ENCODE measurements at regions of chr17 and their contacts with region 1.

Region 1: GRCh38 chr17:7583253-7584109 is at the start of gene MPDU1:
- DNase-seq: peak; percentile 90
- ATAC-seq: peak; percentile 76
- H3K4me3 Mint-ChIP-seq: peak within 1 kb of the TSS; percentile 100
- H3K27ac Mint-ChIP-seq: peak within 1 kb of the TSS; percentile 100
- H3K4me1 Mint-ChIP-seq: peaks cover 64% of the 10 kb centered on the region
- H3K27me3 Mint-ChIP-seq: no peaks in the 10 kb centered on the region
- CTCF ChIP-seq: no peak
- total RNA-seq, gene MPDU1: 50.7 and 58.9 TPM in 2 replicates

Region 2: GRCh38 chr17:7147772-7148171 is 435.7 kb before region 1 on chr17:
- CTCF ChIA-PET with region 1: no interaction called
- POLR2A ChIA-PET with region 1: no interaction called
- intact Hi-C with region 1: no loop called
- DNase-seq: no peak
- ATAC-seq: no peak
- H3K4me3 Mint-ChIP-seq: no peak overlapping the region
- H3K27ac Mint-ChIP-seq: no peak overlapping the region
- H3K4me1 Mint-ChIP-seq: no peaks in the 10 kb centered on the region
- H3K27me3 Mint-ChIP-seq: peaks cover 16% of the 10 kb centered on the region
- CTCF ChIP-seq: no peak

Region 3: DNA sequence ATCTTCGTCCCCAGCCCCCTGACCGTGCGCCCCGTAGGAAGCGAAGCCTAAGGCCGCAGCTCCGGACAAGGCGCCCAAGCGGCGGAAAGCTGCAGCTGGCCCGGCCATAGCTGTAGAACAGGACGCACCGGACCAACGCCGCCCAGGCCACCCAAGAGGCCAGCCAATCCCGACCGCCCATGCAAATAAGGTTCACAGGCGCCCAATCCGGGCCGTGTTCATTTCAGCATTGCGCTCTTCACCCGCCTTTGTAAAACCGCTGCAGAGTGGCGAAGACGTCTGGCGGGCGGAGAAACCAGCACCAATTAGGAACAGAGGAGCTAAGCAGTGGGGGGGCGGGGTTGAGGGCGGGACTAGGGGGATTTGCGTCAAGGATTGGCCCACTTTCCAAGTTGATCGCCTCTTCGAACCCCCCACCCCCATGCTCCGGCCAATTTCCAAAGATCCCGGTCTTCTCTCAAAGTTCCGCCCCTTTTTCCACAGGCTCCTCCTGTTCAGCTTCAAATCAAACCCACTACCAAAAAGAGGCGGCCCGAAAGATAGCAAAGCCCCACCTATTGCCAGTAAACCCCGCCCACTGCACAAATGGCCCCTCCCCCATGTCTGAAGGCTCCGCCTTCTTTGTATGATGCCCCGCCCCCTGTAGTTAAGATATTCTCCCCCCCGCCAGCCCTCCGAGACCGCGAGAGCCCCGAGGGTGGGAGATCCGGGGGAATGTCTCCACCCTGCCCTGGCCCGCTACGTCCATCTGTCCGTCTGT is 179.3 kb before region 1 on chr17 and contains the start of gene TMEM256:
- CTCF ChIA-PET with region 1: no interaction called
- POLR2A ChIA-PET with region 1: interaction called, 10 read pairs
- intact Hi-C with region 1: no loop called
- DNase-seq: peak; percentile 82
- ATAC-seq: peak; percentile 89
- H3K4me3 Mint-ChIP-seq: peak within 1 kb of the TSS; percentile 97
- H3K27ac Mint-ChIP-seq: peak within 1 kb of the TSS; percentile 94
- H3K4me1 Mint-ChIP-seq: peaks cover 16% of the 10 kb centered on the region
- H3K27me3 Mint-ChIP-seq: peaks cover 12% of the 10 kb centered on the region
- CTCF ChIP-seq: no peak
- total RNA-seq, gene TMEM256: 98.2 and 117 TPM in 2 replicates

Region 4: DNA sequence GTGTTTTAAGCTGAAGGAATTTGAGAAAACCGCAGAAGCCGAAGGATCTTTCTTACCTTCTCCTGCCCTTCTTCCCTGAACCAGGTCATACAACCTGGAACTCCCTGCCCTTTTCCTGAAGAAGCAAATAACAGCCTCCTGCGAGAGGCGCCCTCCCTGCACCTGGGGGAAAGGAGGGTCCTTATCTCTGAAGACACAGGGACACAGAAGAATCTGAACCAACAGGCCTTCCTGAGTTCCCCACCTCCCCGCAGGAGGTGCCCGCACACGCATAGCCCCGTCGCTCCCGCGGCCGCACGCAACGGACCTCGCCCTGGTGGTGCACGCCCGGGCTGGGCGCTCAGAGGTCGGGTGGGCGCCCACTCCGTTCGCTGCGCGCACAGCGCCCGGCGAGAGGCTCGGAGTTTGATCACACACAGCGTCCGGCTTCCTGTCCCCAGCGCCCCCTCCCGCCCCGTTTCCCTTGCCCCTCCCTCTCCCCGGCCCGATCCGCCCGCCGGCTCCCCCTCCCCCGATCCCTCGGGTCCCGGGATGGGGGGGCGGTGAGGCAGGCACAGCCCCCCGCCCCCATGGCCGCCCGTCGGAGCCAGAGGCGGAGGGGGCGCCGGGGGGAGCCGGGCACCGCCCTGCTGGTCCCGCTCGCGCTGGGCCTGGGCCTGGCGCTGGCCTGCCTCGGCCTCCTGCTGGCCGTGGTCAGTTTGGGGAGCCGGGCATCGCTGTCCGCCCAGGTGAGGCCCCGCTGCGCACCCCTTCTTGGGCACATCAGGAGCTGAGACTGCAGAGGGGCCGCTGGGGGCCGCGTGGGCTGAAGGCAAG is 34.7 kb before region 1 on chr17 and contains the start of gene TNFSF12:
- CTCF ChIA-PET with region 1: interaction called, 6 read pairs
- POLR2A ChIA-PET with region 1: interaction called, 20 read pairs
- intact Hi-C with region 1: no loop called
- DNase-seq: peak; percentile 55
- ATAC-seq: peak; percentile 58
- H3K4me3 Mint-ChIP-seq: peak within 1 kb of the TSS; percentile 82
- H3K27ac Mint-ChIP-seq: peak within 1 kb of the TSS; percentile 90
- H3K4me1 Mint-ChIP-seq: peaks cover 52% of the 10 kb centered on the region
- H3K27me3 Mint-ChIP-seq: no peaks in the 10 kb centered on the region
- CTCF ChIP-seq: no peak
- total RNA-seq, gene TNFSF12: 25.2 and 30.7 TPM in 2 replicates

Region 5: GRCh38 chr17:7627250-7628121 is 44.0 kb after region 1 on chr17 and contains the start of gene SAT2:
- CTCF ChIA-PET with region 1: interaction called, 3 read pairs
- POLR2A ChIA-PET with region 1: interaction called, 14 read pairs
- intact Hi-C with region 1: no loop called
- DNase-seq: peak; percentile 68
- ATAC-seq: peak; percentile 99
- H3K4me3 Mint-ChIP-seq: peak within 1 kb of the TSS; percentile 93
- H3K27ac Mint-ChIP-seq: peak within 1 kb of the TSS; percentile 80
- H3K4me1 Mint-ChIP-seq: peaks cover 11% of the 10 kb centered on the region
- H3K27me3 Mint-ChIP-seq: no peaks in the 10 kb centered on the region
- CTCF ChIP-seq: no peak
- total RNA-seq, gene SAT2: 44.5 and 45.0 TPM in 2 replicates

Region 6: GRCh38 chr17:7755095-7755890 is 171.8 kb after region 1 on chr17:
- CTCF ChIA-PET with region 1: no interaction called
- POLR2A ChIA-PET with region 1: no interaction called
- intact Hi-C with region 1: no loop called
- DNase-seq: no peak
- ATAC-seq: no peak
- H3K4me3 Mint-ChIP-seq: no peak overlapping the region
- H3K27ac Mint-ChIP-seq: no peak overlapping the region
- H3K4me1 Mint-ChIP-seq: no peaks in the 10 kb centered on the region
- H3K27me3 Mint-ChIP-seq: peaks cover 18% of the 10 kb centered on the region
- CTCF ChIP-seq: no peak

Measured in activated B cell treated with CpG ODN at 0.5 μM for 24 hours (primary cell).